Cardiac septum (tissue), 1 donor: ENCODE measurements at regions of chr1 and their contacts with region 1.

Region 1: GRCh38 chr1:212432706-212433576 is at the start of gene NENF:
- DNase-seq: peak; percentile 88
- total RNA-seq, gene NENF: 116 TPM

Region 2: DNA sequence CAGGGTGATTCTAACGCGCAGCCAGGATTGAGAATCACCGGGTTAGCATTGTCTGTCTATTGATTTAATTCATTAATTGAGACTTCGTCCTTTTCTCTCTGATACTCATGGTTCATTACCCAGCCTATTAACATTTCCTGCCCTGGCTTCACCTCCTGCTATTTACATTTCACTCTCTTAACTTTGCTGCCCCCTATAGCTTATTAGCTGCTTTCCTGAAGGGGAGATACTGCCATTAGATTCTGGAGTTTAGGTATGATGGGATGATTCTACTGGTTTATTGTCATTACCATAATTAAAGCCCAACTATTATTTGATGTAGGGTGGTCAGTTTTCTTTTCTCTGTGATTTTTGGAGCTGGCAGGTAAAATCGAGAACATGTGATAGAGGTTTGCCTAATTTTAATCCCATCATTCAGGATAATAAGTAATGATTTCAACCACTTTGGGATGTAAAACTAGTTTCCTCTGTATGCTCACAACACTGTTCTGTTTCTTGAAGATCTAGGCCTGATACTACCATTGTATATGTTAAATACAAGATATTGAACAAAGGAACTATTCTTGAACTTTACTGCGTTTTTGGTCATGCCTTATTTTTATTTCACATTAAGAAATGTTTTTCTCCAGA is 141.3 kb before region 1 on chr1:
- intact Hi-C with region 1: loop called (anchors 5 kb)
- DNase-seq: no peak

Region 3: DNA sequence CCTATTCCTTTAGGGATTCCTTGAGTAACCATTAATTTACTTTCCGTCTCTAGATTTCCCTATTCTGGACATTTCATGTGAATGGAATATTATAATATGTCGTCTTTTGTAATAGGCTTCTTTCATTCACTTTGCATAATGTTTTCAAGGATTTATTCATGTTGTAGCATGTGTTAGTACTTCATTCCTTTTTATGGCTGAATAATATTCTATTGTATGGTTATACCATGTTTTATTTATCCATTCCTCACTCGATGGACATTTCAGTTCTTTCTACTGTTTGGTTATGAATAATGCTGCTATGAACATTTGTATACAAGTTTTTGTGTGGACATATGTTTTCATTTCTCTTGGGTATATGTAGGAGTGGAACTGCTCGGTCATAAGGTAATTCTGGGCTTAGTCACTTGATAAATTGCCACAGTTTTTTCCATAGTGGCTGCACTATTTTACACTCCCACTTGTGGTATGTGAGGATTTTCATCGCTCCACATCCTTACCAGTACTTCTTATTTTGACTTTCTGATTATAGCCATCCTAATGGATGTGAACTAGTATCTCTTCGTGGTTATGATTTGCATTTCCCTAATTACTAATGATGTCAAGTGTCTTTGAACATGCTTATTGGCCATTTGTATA is 130.1 kb before region 1 on chr1:
- intact Hi-C with region 1: no loop called
- DNase-seq: no peak

Region 4: GRCh38 chr1:212414328-212415106 is 18.4 kb before region 1 on chr1 and contains the start of gene PACC1:
- intact Hi-C with region 1: loop called (anchors 2 kb)
- DNase-seq: peak; percentile 94
- total RNA-seq, gene PACC1: 1.8 TPM